HEK293T (cell line): ENCODE measurements at regions of chr19 and their contacts with region 1.

Region 1: DNA sequence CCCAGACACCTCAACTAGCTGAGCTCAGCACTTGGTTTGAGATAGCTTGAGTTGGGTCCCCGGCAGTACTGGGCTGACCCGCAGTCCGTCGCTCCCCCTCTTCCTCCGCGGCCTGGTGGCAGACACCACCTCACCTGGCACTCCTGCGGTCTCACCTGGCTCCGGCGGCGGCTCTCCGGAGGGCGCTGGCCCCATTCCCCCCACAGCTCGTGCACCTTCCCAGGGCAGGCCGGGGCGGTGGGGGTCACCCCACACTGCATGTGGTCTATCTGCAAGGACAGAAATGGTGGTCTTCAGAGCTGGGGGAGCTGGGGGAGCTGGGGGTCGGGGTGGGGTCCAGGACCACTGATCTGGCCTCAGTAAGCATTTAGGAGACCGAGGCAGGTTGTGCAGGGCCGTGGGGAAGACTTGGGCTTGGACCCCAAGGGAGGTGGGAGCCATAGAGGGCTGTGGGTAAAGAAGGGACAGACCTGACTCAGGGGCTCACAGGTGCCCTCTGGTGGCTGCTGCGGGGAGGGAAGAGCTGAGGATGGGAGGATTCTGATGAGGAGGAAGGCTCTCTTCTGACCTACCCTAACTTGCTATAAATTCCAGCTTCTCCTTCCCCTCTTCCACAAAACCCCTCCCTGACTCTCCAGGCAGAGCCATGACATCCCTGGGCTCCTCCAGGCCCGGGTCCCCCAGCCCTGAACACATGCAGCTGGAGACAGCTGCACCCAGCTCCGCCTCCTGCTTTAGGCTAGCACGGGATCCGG is 6.7 kb upstream of the PLIN4 start:
- DNase-seq: peak; percentile 65

Region 2: DNA sequence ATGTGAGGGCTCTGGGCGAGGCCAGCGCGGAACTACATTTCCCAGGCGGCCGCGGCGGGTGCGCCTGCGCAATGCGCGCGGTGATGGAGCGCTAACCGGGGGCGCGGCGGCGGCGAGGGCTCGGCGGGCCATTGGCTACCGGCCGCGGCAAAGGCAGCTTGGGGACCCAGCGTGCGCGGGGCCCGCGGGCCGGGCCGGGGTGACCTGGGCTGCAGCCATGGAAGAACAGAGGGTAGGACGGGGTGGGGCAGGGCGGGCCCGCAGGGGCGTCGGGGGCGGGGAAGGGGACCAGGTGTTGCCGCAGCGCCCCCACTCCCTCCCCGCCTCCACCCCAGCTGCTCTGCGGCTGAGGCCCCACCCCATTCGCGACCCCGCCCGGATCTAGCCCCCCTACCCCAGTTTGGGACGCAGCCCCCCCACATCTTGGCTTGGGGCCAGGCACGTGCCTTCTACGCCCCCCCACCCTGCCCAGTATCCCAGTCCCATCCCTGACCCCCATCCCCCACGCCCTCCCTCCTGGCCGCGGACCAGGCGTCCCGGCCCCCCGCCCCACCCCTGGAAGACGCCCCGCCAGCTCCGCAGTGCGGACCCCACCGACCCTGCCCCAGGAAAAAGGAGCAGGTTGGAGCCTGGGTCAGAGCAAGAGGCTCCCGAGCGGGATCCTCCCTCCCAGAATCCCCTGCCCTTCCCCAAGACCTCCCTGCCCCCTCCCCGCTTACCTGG is 220.3 kb before region 1 on chr19 and contains the start of gene FSD1:
- CTCF ChIA-PET with region 1: no interaction called
- POLR2A ChIA-PET with region 1: no interaction called
- DNase-seq: peak; percentile 98

Region 3: GRCh38 chr19:4534836-4535658 is 10.1 kb after region 1 on chr19 and contains the start of gene PLIN5:
- CTCF ChIA-PET with region 1: interaction called, 20 read pairs
- POLR2A ChIA-PET with region 1: interaction called, 4 read pairs
- DNase-seq: peak; percentile 97